GM12878 (cell line): ENCODE measurements at regions of chr20 and their contacts with region 1.

Region 1: DNA sequence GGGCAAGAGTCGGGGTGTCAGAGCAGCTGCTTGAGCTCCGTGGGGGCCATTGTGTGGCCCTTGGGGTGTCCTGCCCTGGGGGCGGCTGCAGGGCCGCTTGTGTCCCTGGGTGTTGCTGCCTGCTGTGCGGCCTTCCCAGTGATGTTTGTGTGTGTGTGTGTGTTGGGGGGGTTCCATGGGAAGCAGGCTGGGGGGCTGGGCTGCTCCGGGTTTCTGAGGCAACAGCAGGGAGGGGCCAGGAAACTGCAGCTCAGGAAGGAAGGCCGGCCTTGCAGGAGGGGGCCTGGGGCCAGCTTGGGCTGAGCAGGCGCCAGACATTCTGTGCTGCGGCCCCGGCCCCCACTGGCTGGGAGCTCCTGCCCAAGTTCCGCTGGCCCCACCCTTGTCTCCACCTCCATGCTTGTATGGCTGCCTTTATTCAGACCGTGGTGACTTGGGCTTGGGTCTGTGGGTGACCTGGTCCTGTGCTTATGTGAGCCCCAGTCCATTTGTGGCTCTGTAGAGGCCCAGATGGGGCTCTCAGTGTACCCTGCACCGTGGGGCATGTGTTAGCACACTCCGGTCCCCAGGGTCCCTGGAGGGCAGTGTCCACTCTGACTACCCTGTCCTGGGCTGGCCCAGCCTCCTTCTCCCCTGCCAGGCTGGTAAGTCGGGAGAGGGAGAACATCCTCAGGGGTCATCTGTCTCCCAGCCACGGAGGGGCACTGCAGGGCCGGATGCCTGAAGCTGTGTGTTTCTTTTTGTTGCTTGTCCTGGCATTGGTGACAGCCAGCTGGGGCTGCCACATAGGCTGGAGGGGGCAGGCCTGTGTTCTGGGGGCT is 4.6 kb upstream of the SOX18 start:
- DNase-seq: no peak
- ATAC-seq: peak; percentile 41
- H3K4me3 ChIP-seq: no peak overlapping the region
- H3K27ac ChIP-seq: no peak overlapping the region
- H3K4me1 ChIP-seq: peaks cover 48% of the 10 kb centered on the region
- H3K27me3 ChIP-seq: peaks cover 3 to 8% of the 10 kb centered on the region in 2 experiments; a peak in 3 of 4 replicates
- CTCF ChIP-seq: peak; percentile 44 to 54 (median 47); a peak in 4 of 6 replicates
- EP300 ChIP-seq: no peak
- POLR2A ChIP-seq: no peak
- RAD21 ChIP-seq: peak; percentile 49; the same call in 1 of the 2 replicates

Region 2: DNA sequence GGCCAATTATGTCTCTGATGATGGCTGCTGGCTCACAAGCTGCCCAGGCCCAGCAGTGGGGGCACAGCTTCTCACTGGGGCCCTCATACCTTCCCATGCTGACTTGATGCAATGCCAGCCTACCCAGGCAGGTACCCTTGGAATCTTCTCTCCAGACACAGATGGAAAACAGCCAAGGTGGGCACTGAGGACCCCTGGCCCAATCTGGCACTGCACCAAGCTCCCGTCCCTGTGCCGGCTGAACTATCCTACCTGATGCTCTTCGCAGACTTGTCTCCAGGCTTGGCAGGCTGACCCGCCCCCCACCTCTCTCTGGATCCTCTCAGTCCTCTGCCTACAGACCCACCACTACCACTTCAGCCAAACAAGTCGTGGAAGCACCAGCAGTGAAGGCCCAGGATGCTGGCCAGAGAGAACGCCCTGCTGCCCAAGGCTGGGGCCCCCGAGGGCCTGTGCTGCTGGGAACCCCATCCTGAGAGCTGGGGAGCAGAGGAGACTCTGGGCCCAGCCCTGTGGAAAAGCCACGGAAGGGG is 85.6 kb before region 1 on chr20:
- CTCF ChIA-PET with region 1: no interaction called
- POLR2A ChIA-PET with region 1: no interaction called
- RAD21 ChIA-PET with region 1: no interaction called
- SMC1A ChIA-PET with region 1: no interaction called
- in situ Hi-C with region 1: no loop called
- intact Hi-C with region 1: no loop called
- DNase-seq: no peak
- ATAC-seq: peak; percentile 11; the same call in 1 of the 3 replicates
- H3K4me3 ChIP-seq: peak overlapping the region; percentile 82
- H3K27ac ChIP-seq: peak overlapping the region; percentile 72
- H3K4me1 ChIP-seq: peaks cover 11% of the 10 kb centered on the region
- H3K27me3 ChIP-seq: no peaks in the 10 kb centered on the region
- CTCF ChIP-seq: no peak
- EP300 ChIP-seq: no peak
- POLR2A ChIP-seq: 0 out of 2 replicates have a peak, but pooled peaks have one; percentile 11
- RAD21 ChIP-seq: no peak

Region 3: DNA sequence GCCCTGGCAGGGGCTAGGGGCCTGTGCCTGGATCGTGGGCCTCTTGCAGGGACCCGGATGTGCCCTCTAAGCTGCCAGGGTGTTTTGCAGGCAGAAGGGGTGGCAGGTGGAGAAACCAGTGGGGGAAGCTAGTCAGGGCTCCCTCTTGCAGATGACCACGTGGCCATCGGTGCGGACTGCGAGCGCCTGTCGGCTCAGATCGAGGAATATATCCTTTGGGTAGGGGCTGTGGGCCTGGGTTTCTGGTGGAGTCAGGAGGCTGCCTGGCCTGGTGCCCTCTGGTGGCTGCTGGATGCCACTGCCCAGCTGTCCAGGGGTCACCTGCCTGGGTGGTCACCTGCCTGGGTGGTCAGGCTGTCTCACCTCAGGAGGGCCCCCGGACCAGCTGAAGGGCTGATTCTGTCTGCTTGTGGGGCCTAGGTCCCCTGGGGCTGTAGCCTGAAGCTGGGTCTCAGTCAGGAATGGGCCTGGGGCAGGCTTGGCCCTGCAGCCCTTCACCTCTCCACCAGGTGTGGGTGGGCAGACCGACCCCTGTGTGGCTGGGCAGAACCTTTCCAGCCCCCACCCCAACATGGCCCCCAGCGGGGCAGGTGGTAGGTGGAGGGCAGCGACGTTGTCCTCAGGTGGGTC is 15.7 kb after region 1 on chr20:
- CTCF ChIA-PET with region 1: interaction called, 10 read pairs
- POLR2A ChIA-PET with region 1: interaction called, 6 read pairs
- RAD21 ChIA-PET with region 1: no interaction called
- SMC1A ChIA-PET with region 1: interaction called, 3 read pairs
- in situ Hi-C with region 1: no loop called
- intact Hi-C with region 1: no loop called
- DNase-seq: no peak
- ATAC-seq: peak; percentile 40
- H3K4me3 ChIP-seq: no peak overlapping the region
- H3K27ac ChIP-seq: no peak overlapping the region
- H3K4me1 ChIP-seq: peaks cover 18% of the 10 kb centered on the region
- H3K27me3 ChIP-seq: no peaks in the 10 kb centered on the region
- CTCF ChIP-seq: peak; percentile 64 to 90 (median 77)
- EP300 ChIP-seq: no peak
- POLR2A ChIP-seq: no peak
- RAD21 ChIP-seq: peak; percentile 30